Aorta (tissue), 5 donors: ENCODE measurements at regions of chr12 and their contacts with region 1.

Region 1: GRCh38 chr12:15165012-15165659 is 56.1 kb downstream of the RERG start:
- DNase-seq: peak in 1 of 2 donors; percentile 62
- ATAC-seq: peak; percentile 77
- H3K4me3 ChIP-seq: no peak overlapping the region
- H3K27ac ChIP-seq: peak overlapping the region; percentile 97 to 98
- H3K4me1 ChIP-seq: peaks cover 14 to 15% of the 10 kb centered on the region in 2 donors
- H3K27me3 ChIP-seq: no peaks in the 10 kb centered on the region

Region 2: GRCh38 chr12:15200641-15201040 is 35.5 kb after region 1 on chr12:
- intact Hi-C with region 1: loop called (anchors 2 to 5 kb)
- DNase-seq: no peak
- ATAC-seq: no peak
- H3K4me3 ChIP-seq: no peak overlapping the region
- H3K27ac ChIP-seq: no peak overlapping the region
- H3K4me1 ChIP-seq: peaks cover 0 to 3% of the 10 kb centered on the region in 2 donors
- H3K27me3 ChIP-seq: no peaks in the 10 kb centered on the region

Region 3: GRCh38 chr12:15208125-15208524 is 43.0 kb after region 1 on chr12:
- intact Hi-C with region 1: loop called in 1 of 2 experiments (anchors 5 kb)
- DNase-seq: no peak
- ATAC-seq: no peak
- H3K4me3 ChIP-seq: no peak overlapping the region
- H3K27ac ChIP-seq: peak overlapping the region in 1 of 2 donors; percentile 75
- H3K4me1 ChIP-seq: peaks cover 7 to 14% of the 10 kb centered on the region in 2 donors
- H3K27me3 ChIP-seq: no peaks in the 10 kb centered on the region